A673 (cell line): ENCODE measurements at regions of chr11 and their contacts with region 1.

Region 1: GRCh38 chr11:47642099-47642855 is at the start of gene MTCH2:
- DNase-seq: peak; percentile 100
- H3K4me3 ChIP-seq: peak within 1 kb of the TSS; percentile 70
- H3K27ac ChIP-seq: peak within 1 kb of the TSS; percentile 79
- H3K4me1 ChIP-seq: peaks cover 15% of the 10 kb centered on the region
- H3K27me3 ChIP-seq: no peaks in the 10 kb centered on the region
- CTCF ChIP-seq: peak; percentile 52; the same call in 1 of the 2 replicates
- total RNA-seq, gene MTCH2: 367 and 382 TPM in 2 replicates

Region 2: GRCh38 chr11:47587723-47588326 is 54.5 kb before region 1 on chr11:
- CTCF ChIA-PET with region 1: no interaction called
- POLR2A ChIA-PET with region 1: no interaction called
- intact Hi-C with region 1: loop called (anchors 10 kb)
- DNase-seq: no peak
- H3K4me3 ChIP-seq: no peak overlapping the region
- H3K27ac ChIP-seq: no peak overlapping the region
- H3K4me1 ChIP-seq: no peaks in the 10 kb centered on the region
- H3K27me3 ChIP-seq: peaks cover 4% of the 10 kb centered on the region
- CTCF ChIP-seq: no peak

Region 3: DNA sequence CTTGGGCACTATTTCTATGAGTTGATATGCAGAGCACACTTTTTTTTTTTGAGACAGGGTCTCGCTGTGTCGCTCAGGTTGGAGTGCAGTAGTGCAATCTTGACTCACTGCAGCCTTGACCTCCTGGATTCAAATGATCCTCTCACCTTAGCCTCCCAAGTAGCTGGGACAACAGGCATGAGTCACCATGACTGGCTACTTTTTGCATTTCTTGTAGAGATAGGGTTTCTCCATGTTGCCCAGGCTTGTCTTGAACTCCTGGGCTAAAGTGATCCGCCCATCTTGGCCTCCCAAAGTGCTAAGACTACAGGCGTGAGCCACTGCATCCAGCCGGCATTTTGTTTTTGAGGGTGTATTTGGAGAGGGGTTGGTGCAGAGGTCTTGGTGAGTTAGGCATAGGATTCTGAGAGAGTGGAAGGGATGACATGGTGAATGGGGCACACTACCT is 30.0 kb after region 1 on chr11:
- CTCF ChIA-PET with region 1: no interaction called
- POLR2A ChIA-PET with region 1: no interaction called
- intact Hi-C with region 1: no loop called
- DNase-seq: no peak
- H3K4me3 ChIP-seq: no peak overlapping the region
- H3K27ac ChIP-seq: no peak overlapping the region
- H3K4me1 ChIP-seq: no peaks in the 10 kb centered on the region
- H3K27me3 ChIP-seq: no peaks in the 10 kb centered on the region
- CTCF ChIP-seq: no peak

Region 4: GRCh38 chr11:47715082-47715669 is 72.9 kb after region 1 on chr11 and contains the start of gene AGBL2:
- CTCF ChIA-PET with region 1: interaction called, 3 read pairs
- POLR2A ChIA-PET with region 1: no interaction called
- intact Hi-C with region 1: loop called (anchors 2 kb)
- DNase-seq: peak; percentile 94
- H3K4me3 ChIP-seq: peak within 1 kb of the TSS; percentile 61
- H3K27ac ChIP-seq: peak within 1 kb of the TSS; percentile 63
- H3K4me1 ChIP-seq: peaks cover 12% of the 10 kb centered on the region
- H3K27me3 ChIP-seq: no peaks in the 10 kb centered on the region
- CTCF ChIP-seq: no peak
- total RNA-seq, gene AGBL2: 6.5 and 8.2 TPM in 2 replicates

Region 5: DNA sequence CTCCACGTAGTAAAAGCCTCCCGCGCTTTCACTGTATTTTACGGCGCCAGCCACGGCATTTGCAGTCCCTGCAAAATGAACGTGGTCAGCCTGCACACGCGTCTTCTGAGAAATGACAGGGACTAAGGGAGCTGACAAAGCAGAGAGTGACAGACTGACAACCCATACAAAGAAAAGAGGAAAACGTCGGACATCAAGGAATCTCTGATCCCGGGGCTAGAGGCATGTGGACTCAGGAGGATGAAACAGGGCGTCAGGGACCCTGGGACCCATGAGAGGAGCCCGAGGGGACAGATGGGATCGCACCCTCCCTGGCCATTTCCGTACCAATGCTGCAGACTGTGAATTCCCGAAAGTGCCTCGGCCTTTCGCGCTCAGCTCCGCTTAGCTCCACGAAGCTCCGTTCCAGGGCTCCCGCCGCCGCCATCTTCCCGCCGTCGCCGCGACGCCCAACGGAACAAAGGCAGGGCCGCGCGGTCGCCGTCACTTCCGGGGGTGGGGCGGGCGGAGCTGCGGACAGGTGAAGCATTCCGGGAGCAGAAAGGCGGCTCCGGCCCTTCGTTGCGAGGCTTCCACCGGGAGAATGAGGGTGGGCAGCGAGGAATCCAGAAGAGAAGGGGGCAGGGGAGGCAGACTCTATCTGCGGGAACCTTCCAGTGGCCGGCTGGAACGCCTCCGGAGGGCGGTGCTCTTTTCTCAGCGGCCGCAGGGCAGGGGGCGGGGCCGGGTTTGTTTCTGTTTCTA is 205.8 kb after region 1 on chr11 and contains the start of gene NUP160:
- CTCF ChIA-PET with region 1: no interaction called
- POLR2A ChIA-PET with region 1: no interaction called
- intact Hi-C with region 1: loop called (anchors 5 kb)
- DNase-seq: peak; percentile 93
- H3K4me3 ChIP-seq: peak within 1 kb of the TSS; percentile 62
- H3K27ac ChIP-seq: peak within 1 kb of the TSS; percentile 93
- H3K4me1 ChIP-seq: peaks cover 13% of the 10 kb centered on the region
- H3K27me3 ChIP-seq: no peaks in the 10 kb centered on the region
- CTCF ChIP-seq: 0 out of 2 replicates have a peak, but pooled peaks have one; percentile 27
- total RNA-seq, gene NUP160: 162 and 172 TPM in 2 replicates